ENCODE measurements at regions of chr2 and their contacts with region 1.

Region 1: DNA sequence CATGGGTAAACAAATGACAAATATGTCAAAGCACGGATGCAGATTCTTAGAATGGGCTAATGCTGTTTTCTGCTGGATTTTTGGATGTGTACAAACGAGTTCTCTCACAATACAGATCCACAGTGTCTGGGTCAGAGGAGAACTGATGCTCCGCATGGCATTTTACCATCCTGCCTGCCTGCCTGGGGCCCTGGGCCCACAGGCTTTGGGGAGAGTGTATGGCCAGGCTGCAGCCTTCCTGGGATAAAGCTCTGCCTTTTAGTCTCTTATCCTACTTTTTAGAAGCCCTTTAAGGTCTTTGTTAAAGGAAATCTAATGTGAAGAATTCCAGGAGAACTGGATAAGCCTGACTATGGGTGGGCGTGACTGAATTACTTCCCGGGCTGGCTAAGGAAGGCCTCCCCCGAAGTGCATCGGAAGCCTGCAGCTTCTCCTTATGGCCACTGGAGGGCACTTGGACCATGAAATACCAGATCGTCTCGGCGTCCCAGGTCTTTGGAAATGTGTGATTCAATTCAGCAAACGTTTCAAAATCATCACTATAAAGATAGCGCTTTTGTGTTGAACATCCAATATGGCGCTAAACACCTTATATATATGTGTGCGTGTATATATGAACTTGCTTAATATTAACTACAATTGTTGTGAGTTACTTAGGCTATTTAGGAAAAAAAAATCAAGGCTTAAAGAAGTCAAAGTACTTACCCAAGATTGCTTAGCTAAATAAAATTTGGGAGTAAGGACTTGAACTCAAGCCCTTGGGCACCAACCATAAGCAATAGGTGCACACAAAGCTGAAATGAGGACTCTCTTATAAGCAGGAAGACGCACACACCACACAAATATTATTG is 15.2 kb upstream of the DNPEP start:
- DNase-seq: peak; percentile 42
- H3K4me3 ChIP-seq: no peak overlapping the region
- CTCF ChIP-seq: peak; percentile 85

Region 2: DNA sequence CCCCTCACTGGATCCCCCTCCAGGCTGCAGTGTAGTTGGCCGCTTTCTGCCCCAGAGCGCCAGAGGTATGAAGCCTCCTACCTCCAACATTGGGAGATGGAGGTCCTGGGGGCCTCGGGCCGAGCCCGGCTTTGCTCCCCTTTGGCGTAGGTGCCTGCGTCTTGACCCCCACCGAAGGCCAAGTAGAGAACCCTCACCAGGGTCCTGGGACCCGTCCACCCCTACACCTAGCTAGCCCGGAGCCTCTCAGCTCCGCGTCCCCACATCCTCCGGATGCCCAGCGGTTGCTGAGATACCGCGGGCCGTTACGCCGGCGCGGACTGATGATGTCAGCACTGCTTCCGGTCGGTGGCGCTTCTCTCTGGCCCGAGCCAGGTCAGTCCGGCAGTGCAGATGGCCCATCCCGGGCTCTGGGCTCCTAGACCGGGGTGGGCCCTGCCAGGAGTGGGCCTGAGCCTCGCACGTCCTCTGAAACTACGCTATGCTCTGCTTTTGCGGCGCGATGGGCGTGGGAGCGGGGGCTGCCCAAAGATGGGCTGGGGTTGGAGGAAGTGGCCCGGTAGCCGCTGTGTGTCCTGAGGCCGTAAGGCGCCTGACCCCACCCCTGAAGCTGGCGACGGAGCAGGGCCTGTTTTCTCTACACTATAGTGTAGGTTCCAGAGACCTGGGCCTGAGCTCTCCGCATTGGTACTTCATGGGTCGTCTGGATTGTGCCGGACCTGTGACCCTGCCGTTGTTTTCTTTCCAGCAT is 157.6 kb before region 1 on chr2 and contains the starts of genes GLB1L and STK16:
- CTCF ChIA-PET with region 1: no interaction called
- POLR2A ChIA-PET with region 1: no interaction called
- DNase-seq: peak; percentile 57
- H3K4me3 ChIP-seq: peak within 1 kb of the TSS; percentile 98
- CTCF ChIP-seq: no peak

Region 3: DNA sequence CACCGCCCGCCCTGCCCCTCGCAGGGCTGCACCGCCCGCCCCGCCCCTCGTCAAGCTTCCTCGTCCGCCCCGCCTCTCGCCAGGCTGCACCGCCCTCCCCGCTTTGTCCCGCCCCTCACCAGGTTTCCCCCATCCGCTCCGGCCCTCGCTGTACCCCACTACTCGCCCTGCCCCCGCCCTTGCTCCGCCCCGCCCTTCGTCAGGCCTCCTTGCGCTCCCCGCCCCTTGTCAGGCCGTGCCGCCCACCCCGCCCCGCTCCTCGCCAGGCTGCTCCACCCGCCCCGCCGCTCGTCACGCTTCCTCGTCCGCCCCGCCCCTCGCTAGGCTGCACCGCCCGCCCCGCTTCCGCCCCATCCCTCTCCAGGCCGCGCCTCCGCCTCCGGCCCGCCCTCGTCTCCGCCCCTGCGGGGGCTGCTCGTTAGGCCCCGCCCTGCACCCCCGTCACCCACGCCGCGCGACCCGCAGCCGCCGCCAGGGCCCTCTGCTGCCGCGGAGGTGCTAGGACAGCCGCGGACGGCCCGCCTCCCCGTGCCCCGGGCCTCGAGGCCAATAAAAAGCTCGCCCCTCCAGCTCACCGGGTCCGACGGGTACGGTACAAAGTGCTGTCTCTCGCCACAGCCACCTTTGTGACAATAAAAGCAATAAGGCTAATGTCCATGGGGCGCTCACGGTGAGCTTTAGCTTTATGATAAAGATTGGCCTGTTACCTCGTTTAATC is 14.6 kb before region 1 on chr2:
- CTCF ChIA-PET with region 1: interaction called, 187 read pairs
- POLR2A ChIA-PET with region 1: no interaction called
- DNase-seq: peak; percentile 73
- H3K4me3 ChIP-seq: peak overlapping the region; percentile 56
- CTCF ChIP-seq: peak; percentile 60

Region 4: GRCh38 chr2:219430633-219431615 is 28.0 kb after region 1 on chr2:
- CTCF ChIA-PET with region 1: interaction called, 50 read pairs
- POLR2A ChIA-PET with region 1: no interaction called
- DNase-seq: no peak
- H3K4me3 ChIP-seq: no peak overlapping the region
- CTCF ChIP-seq: peak; percentile 48

Region 5: GRCh38 chr2:219459460-219460311 is 56.8 kb after region 1 on chr2:
- CTCF ChIA-PET with region 1: interaction called, 30 read pairs
- POLR2A ChIA-PET with region 1: no interaction called
- DNase-seq: no peak
- H3K4me3 ChIP-seq: no peak overlapping the region
- CTCF ChIP-seq: peak; percentile 96

Region 6: GRCh38 chr2:219498280-219499057 is 95.6 kb after region 1 on chr2 and contains the start of gene GMPPA:
- CTCF ChIA-PET with region 1: interaction called, 134 read pairs
- POLR2A ChIA-PET with region 1: no interaction called
- DNase-seq: peak; percentile 95
- H3K4me3 ChIP-seq: peak within 1 kb of the TSS; percentile 75
- CTCF ChIP-seq: peak; percentile 9

Region 7: DNA sequence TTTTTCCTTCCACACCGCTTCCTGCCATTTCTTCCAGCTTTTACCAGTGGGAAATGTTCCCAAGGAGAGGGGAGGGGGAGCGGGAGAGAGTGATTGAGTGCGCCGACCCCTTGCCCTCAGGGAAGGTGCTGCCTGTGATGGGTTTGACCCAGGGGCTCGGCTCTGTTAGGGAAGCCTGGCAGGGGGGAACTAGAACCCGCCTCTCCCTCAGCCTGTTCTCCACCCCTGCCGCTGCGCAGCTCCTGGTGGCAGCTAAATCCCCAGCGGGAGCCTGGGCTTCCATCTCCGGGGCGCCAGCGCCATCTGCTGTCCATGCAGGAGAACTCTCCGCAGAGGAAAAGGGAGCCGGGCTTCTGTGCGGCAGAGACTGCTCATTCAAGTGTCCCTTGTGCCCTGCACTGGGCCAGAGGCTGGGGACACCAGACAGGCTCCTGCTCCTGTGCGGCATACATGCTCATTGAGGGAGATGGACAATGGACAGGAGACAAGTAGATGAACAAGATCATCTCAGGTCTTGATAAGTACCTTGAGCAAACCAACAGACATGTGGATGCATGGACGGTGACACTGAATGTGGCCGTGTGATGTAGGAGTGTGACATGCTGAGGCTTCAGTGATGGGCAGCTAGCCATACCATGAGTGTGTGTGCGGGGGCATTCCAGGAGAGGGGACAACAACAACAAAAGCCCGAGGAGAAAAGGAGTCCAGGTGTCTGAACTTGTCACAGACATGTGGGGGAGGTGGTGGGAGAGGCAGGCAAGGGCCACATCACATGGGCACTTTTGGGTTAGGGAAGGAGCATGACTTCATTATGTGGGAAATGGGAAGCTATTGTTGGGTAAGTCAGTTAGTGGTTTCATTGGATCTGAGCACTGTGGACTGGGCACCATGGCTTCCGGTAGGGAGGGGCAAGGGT is 127.4 kb after region 1 on chr2:
- CTCF ChIA-PET with region 1: interaction called, 887 read pairs
- POLR2A ChIA-PET with region 1: interaction called, 3 read pairs
- DNase-seq: no peak
- H3K4me3 ChIP-seq: peak overlapping the region; percentile 49
- CTCF ChIP-seq: peak; percentile 98

Region 8: DNA sequence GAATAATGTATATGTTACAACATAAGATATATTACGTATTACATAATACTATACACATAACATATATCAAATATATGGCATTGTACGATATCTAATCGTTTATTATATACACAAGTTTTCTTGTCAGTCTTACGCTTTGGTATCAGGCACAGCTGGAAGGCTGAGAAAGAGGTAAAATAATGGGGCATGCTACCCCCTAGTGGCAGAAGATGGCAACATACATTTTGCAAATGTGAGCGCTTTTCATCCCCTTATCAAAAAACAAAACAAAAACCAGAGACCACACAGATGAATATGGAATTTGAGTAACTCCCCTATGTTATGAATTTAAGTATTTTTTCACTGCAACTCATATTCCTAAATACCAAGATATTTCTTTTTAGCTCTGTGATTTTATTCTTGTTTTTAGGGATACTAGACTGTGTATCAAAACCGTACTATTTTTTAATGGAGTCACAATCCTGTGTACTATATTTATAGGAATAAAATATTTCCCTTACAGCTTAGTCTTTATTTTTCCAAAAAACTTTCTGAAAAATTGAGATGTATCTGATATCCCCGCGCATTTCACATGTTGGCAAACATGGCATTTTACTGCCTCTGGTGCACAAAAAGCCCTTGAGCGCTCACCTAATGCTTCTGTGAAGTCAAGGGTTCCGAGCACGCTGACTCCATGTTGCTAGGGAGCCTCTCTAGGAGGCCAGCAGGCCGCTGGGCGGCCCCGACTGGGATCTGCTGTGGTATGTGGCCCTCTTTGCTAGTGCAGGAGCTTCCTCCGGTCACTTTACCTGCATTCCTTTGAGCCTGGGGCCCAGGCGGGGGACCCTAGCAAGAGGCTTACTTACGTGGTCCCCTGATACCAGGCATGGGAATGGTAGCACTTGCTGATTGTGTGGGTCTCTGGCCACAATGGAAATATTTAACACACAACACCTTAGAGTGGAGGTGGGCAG is 287.1 kb after region 1 on chr2:
- CTCF ChIA-PET with region 1: interaction called, 12 read pairs
- POLR2A ChIA-PET with region 1: no interaction called
- DNase-seq: no peak
- H3K4me3 ChIP-seq: no peak overlapping the region
- CTCF ChIP-seq: peak; percentile 63

Measured in AG04449 (cell line).